ENCODE measurements at regions of chr2 and their contacts with region 1.

Region 1: GRCh38 chr2:121080013-121080772 is 204.8 kb downstream of the TFCP2L1 start:
- DNase-seq: peak; percentile 27 to 66
- ATAC-seq: peak in 2 of 3 donors; percentile 49 to 59
- H3K4me3 ChIP-seq: no peak overlapping the region
- H3K4me3 Mint-ChIP-seq: no peak overlapping the region
- H3K27ac ChIP-seq: no peak overlapping the region
- H3K27ac Mint-ChIP-seq: no peak overlapping the region
- H3K4me1 ChIP-seq: no peaks in the 10 kb centered on the region
- H3K4me1 Mint-ChIP-seq: peaks cover 0 to 5% of the 10 kb centered on the region in 2 donors
- H3K27me3 ChIP-seq: peaks cover 2% of the 10 kb centered on the region
- H3K27me3 Mint-ChIP-seq: peaks cover 7 to 9% of the 10 kb centered on the region in 2 donors
- CTCF ChIP-seq: peak; percentile 77

Region 2: DNA sequence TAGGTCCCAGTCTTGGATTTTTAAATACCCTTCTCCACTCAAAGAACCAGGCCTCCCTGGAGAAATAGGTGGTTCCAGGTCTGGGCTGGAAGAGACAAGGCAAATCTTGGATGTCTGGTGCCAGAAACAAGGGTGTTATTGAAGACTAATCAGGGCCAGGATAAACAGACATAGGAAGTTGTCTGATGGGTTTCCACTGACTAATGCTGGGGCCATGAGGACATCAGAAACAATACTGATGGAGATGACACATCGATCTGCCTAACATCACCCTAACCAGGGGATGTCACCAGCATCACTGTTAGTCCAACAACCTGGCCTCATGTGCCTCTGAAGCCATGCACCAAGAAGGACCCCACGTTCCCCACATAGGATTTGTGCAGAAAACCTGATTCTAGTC is 387.1 kb before region 1 on chr2:
- intact Hi-C with region 1: loop called (anchors 10 kb)
- DNase-seq: no peak
- ATAC-seq: no peak
- H3K4me3 ChIP-seq: no peak overlapping the region
- H3K4me3 Mint-ChIP-seq: no peak overlapping the region
- H3K27ac ChIP-seq: no peak overlapping the region
- H3K27ac Mint-ChIP-seq: no peak overlapping the region
- H3K4me1 ChIP-seq: no peaks in the 10 kb centered on the region
- H3K4me1 Mint-ChIP-seq: peaks cover 0 to 5% of the 10 kb centered on the region in 2 donors
- H3K27me3 ChIP-seq: peaks cover 7% of the 10 kb centered on the region
- H3K27me3 Mint-ChIP-seq: peaks cover 20 to 46% of the 10 kb centered on the region in 2 donors
- CTCF ChIP-seq: no peak

Region 3: GRCh38 chr2:121976926-121977325 is 896.7 kb after region 1 on chr2:
- intact Hi-C with region 1: no loop called
- DNase-seq: no peak
- ATAC-seq: no peak
- H3K4me3 ChIP-seq: no peak overlapping the region
- H3K4me3 Mint-ChIP-seq: no peak overlapping the region
- H3K27ac ChIP-seq: no peak overlapping the region
- H3K27ac Mint-ChIP-seq: no peak overlapping the region
- H3K4me1 ChIP-seq: peaks cover 8% of the 10 kb centered on the region
- H3K4me1 Mint-ChIP-seq: peaks cover 0 to 12% of the 10 kb centered on the region in 2 donors
- H3K27me3 ChIP-seq: no peaks in the 10 kb centered on the region
- H3K27me3 Mint-ChIP-seq: no peaks in the 10 kb centered on the region
- CTCF ChIP-seq: no peak

Measured in natural killer cell (primary cell).